Gastrocnemius medialis (tissue), 4 donors: ENCODE measurements at regions of chr1 and their contacts with region 1.

Region 1: DNA sequence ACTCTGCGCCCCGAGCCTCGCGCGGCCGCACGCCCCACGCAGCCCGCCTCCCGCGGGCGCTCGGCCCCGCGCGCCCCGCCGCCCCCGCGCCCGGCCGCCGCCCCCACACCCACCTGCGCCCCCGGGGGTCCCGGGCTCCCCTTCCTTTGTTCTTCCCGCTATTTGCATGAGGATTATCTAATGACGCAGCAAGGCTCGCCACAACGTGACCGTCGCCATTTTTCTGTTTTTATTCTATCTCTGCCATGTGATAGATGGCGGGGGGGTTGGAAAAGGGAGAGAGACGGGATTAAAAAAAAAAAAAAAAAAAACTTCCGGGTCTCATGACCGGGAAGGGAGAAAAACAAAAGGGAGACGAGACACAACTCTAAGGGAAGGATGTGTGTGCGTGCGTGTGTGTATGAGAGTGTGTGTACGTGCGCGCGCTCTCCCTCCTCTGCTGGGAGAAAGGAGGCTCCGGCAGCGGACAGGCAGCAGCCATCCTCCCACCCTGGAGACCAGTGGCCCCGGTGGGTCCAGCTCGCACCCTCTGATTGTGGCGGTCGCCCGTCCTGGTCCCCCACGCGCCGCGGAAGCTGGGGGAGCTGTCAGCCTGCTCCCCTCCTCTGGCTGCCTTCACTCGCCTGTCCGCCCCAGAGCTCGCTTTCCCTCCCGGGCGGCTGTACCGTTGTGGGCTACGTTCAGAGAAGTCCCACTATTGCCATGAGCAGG is 80.4 kb upstream of the AK4 start:
- DNase-seq: peak; percentile 72 to 77
- ATAC-seq: peak; percentile 68 to 77
- H3K4me3 ChIP-seq: peak overlapping the region; percentile 56 to 99 (median 88)
- H3K27ac ChIP-seq: peak overlapping the region; percentile 98 to 100 (median 100)
- H3K4me1 ChIP-seq: peaks cover 39 to 41% of the 10 kb centered on the region in 2 donors
- H3K27me3 ChIP-seq: no peaks in the 10 kb centered on the region
- CTCF ChIP-seq: no peak
- POLR2A ChIP-seq: peak; percentile 78 to 93

Region 2: DNA sequence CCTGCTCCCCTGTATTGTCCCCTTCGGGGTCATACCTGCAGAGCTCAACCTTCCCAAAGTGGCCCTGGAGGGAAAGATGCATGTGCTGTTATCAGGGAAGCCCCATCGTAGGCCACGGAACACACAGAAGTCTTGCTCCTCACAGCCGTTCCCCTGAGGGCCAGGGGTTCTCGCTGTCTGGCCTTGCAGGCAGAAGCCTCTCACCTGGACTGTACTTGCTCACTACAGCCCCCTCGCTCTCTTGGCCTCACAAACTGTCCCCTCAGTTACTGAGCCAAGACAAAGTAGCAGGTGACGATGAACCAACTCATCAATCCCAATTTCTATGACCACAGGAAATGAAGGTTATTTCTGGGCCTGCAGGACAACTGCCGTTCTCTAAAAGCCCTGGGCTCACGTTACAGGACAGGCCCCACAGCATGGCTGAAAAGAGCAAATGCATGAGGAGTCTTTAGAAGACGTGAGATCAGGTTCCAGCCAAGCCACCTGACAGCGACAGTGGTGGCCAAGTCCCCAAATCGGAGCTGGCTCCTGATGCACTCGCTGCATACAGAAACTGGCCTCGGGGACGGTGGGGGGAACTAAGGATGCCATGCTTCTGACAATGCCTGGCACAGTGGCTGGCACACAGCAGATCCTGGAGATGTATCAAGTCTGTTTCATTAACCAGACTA is 227.8 kb before region 1 on chr1:
- in situ Hi-C with region 1: no loop called
- intact Hi-C with region 1: loop called (anchors 5 kb)
- DNase-seq: peak; percentile 84 to 92
- ATAC-seq: peak; percentile 95 to 96
- H3K4me3 ChIP-seq: no peak overlapping the region
- H3K27ac ChIP-seq: peak overlapping the region; percentile 72 to 88 (median 80)
- H3K4me1 ChIP-seq: peaks cover 26 to 27% of the 10 kb centered on the region in 2 donors
- H3K27me3 ChIP-seq: no peaks in the 10 kb centered on the region
- CTCF ChIP-seq: no peak
- POLR2A ChIP-seq: no peak

Region 3: GRCh38 chr1:64864018-64864940 is 203.4 kb before region 1 on chr1:
- in situ Hi-C with region 1: loop called in 3 of 4 experiments (anchors 10 to 25 kb)
- intact Hi-C with region 1: loop called (anchors 5 kb)
- DNase-seq: peak; percentile 44 to 54
- ATAC-seq: peak; percentile 48 to 51
- H3K4me3 ChIP-seq: no peak overlapping the region
- H3K27ac ChIP-seq: peak overlapping the region; percentile 35 to 69 (median 52)
- H3K4me1 ChIP-seq: peaks cover 6 to 11% of the 10 kb centered on the region in 2 donors
- H3K27me3 ChIP-seq: no peaks in the 10 kb centered on the region
- CTCF ChIP-seq: no peak
- POLR2A ChIP-seq: peak in 1 of 2 donors; percentile 14

Region 4: GRCh38 chr1:64966158-64966971 is 101.3 kb before region 1 on chr1 and contains the start of gene JAK1:
- in situ Hi-C with region 1: loop called in 1 of 4 experiments (anchors 10 kb)
- intact Hi-C with region 1: loop called (anchors 2 kb)
- DNase-seq: peak; percentile 68 to 71
- ATAC-seq: peak; percentile 83 to 84
- H3K4me3 ChIP-seq: peak within 1 kb of the TSS; percentile 78 to 93 (median 83)
- H3K27ac ChIP-seq: peak within 1 kb of the TSS; percentile 91 to 97 (median 94)
- H3K4me1 ChIP-seq: peaks cover 38 to 39% of the 10 kb centered on the region in 2 donors
- H3K27me3 ChIP-seq: no peaks in the 10 kb centered on the region
- CTCF ChIP-seq: no peak
- POLR2A ChIP-seq: peak; percentile 90 to 97
- total RNA-seq, gene JAK1: 121 to 241 (median 165) TPM

Region 5: GRCh38 chr1:65419681-65420589 is 352.3 kb after region 1 on chr1:
- in situ Hi-C with region 1: loop called in 1 of 4 experiments (anchors 5 kb)
- intact Hi-C with region 1: loop called (anchors 5 kb)
- DNase-seq: peak; percentile 98
- ATAC-seq: peak; percentile 84 to 85
- H3K4me3 ChIP-seq: peak overlapping the region; percentile 58 to 86 (median 72)
- H3K27ac ChIP-seq: peak overlapping the region; percentile 94 to 97 (median 96)
- H3K4me1 ChIP-seq: peaks cover 22 to 30% of the 10 kb centered on the region in 2 donors
- H3K27me3 ChIP-seq: no peaks in the 10 kb centered on the region
- CTCF ChIP-seq: no peak
- POLR2A ChIP-seq: peak; percentile 22 to 26

Region 6: GRCh38 chr1:66331657-66332547 is 1264.3 kb after region 1 on chr1:
- in situ Hi-C with region 1: loop called in 1 of 4 experiments (anchors 25 kb)
- intact Hi-C with region 1: no loop called
- DNase-seq: peak; percentile 43 to 83
- ATAC-seq: peak; percentile 41 to 58
- H3K4me3 ChIP-seq: peak overlapping the region; percentile 48 to 63 (median 59)
- H3K27ac ChIP-seq: peak overlapping the region; percentile 86 to 92 (median 90)
- H3K4me1 ChIP-seq: peaks cover 41 to 53% of the 10 kb centered on the region in 2 donors
- H3K27me3 ChIP-seq: no peaks in the 10 kb centered on the region
- CTCF ChIP-seq: peak; percentile 39 to 55 (median 50)
- POLR2A ChIP-seq: peak; percentile 30 to 51